Thyroid gland (tissue), 4 donors: ENCODE measurements at regions of chr10 and their contacts with region 1.

Region 1: GRCh38 chr10:6088721-6089390 is at the start of gene RBM17:
- DNase-seq: peak; percentile 96
- H3K4me3 ChIP-seq: peak within 1 kb of the TSS; percentile 60 to 90 (median 89)
- H3K27ac ChIP-seq: peak within 1 kb of the TSS; percentile 59 to 79 (median 71)
- H3K4me1 ChIP-seq: peaks cover 29 to 41% of the 10 kb centered on the region in 2 donors
- H3K27me3 ChIP-seq: no peaks in the 10 kb centered on the region
- CTCF ChIP-seq: peak; percentile 99 to 100 (median 100)
- POLR2A ChIP-seq: peak in 1 of 2 donors; percentile 77
- total RNA-seq, gene RBM17: 64.3 to 93.3 (median 81.7) TPM

Region 2: GRCh38 chr10:5873515-5873995 is 215.3 kb before region 1 on chr10:
- intact Hi-C with region 1: no loop called
- DNase-seq: peak; percentile 61 to 70
- H3K4me3 ChIP-seq: no peak overlapping the region
- H3K27ac ChIP-seq: no peak overlapping the region
- H3K4me1 ChIP-seq: peaks cover 0 to 14% of the 10 kb centered on the region in 2 donors
- H3K27me3 ChIP-seq: no peaks in the 10 kb centered on the region
- CTCF ChIP-seq: peak; percentile 63 to 78 (median 71)
- POLR2A ChIP-seq: no peak

Region 3: GRCh38 chr10:6014241-6014761 is 74.6 kb before region 1 on chr10:
- intact Hi-C with region 1: loop called (anchors 10 kb)
- DNase-seq: peak; percentile 48 to 57
- H3K4me3 ChIP-seq: no peak overlapping the region
- H3K27ac ChIP-seq: no peak overlapping the region
- H3K4me1 ChIP-seq: peaks cover 0 to 4% of the 10 kb centered on the region in 2 donors
- H3K27me3 ChIP-seq: no peaks in the 10 kb centered on the region
- CTCF ChIP-seq: peak; percentile 26 to 74 (median 52)
- POLR2A ChIP-seq: no peak

Region 4: GRCh38 chr10:6033954-6034353 is 54.9 kb before region 1 on chr10:
- intact Hi-C with region 1: no loop called
- DNase-seq: no peak
- H3K4me3 ChIP-seq: no peak overlapping the region
- H3K27ac ChIP-seq: peak overlapping the region in 1 of 3 donors; percentile 45
- H3K4me1 ChIP-seq: no peaks in the 10 kb centered on the region
- H3K27me3 ChIP-seq: no peaks in the 10 kb centered on the region
- CTCF ChIP-seq: no peak
- POLR2A ChIP-seq: no peak

Region 5: GRCh38 chr10:6050801-6051445 is 37.9 kb before region 1 on chr10:
- intact Hi-C with region 1: no loop called
- DNase-seq: peak; percentile 27 to 46
- H3K4me3 ChIP-seq: no peak overlapping the region
- H3K27ac ChIP-seq: peak overlapping the region; percentile 52 to 59 (median 59)
- H3K4me1 ChIP-seq: peaks cover 0 to 32% of the 10 kb centered on the region in 2 donors
- H3K27me3 ChIP-seq: no peaks in the 10 kb centered on the region
- CTCF ChIP-seq: peak in 2 of 6 experiments; percentile 18
- POLR2A ChIP-seq: no peak

Region 6: GRCh38 chr10:6473901-6474370 is 385.1 kb after region 1 on chr10:
- intact Hi-C with region 1: no loop called
- DNase-seq: peak; percentile 71 to 78
- H3K4me3 ChIP-seq: no peak overlapping the region
- H3K27ac ChIP-seq: peak overlapping the region; percentile 64 to 75 (median 69)
- H3K4me1 ChIP-seq: peaks cover 0 to 11% of the 10 kb centered on the region in 2 donors
- H3K27me3 ChIP-seq: no peaks in the 10 kb centered on the region
- CTCF ChIP-seq: no peak
- POLR2A ChIP-seq: no peak